ENCODE measurements at regions of chr3 and their contacts with region 1.

Region 1: DNA sequence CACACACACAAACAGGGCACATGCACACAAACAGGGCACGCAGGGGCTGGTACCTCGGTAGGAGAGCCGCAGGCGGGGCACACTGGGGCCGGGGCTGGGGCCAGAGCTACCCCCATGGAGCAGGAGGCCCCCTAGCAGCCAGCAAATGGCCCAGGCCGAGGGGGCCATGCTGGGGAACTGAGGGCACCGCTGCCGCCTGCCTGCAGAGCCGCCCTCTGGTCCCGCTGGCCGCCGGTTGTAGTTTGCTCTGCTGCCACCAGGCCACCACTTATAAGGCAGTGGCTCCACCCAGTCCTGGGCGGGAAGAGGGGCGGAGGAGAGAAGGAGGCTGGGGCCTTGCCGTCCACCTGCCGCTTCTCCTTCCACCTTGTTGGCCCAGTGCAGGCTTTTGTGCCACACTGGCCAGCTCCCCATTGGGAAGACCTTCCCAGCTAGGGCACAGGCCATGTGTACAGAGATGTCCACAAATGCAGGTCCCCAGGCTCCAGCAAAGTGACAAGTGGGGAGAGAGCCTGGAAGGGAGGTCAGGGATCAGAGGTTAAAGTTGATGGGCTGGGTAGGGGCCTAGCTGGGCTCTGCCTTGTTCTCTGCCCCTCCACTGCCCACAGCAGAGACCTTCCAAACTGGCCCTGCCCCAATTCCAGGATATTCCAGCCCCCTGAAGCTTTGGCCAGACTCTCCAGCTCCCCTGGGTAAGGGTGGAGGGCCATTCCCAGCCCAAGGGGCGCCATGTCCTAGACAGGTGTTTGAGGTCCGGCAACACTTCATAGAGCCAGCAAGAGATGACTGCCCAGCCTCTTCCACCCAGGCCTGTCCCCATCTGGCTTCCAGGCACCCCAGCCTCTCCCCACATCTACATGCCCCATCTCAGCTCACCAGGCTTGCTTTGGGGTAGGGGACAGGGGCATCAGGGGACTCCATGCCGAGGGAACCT is at the start of gene SEMA3G:
- DNase-seq: peak; percentile 57 to 61 (median 58)
- H3K4me3 ChIP-seq: no peak within 1 kb of the TSS
- H3K4me3 Mint-ChIP-seq: no peak within 1 kb of the TSS
- H3K27ac ChIP-seq: no peak within 1 kb of the TSS
- H3K27ac Mint-ChIP-seq: peak within 1 kb of the TSS in 2 of 7 donors; percentile 12 to 13
- H3K4me1 ChIP-seq: peaks cover 5 to 11% of the 10 kb centered on the region in 2 donors
- H3K4me1 Mint-ChIP-seq: peaks cover 6% of the 10 kb centered on the region
- H3K27me3 ChIP-seq: no peaks in the 10 kb centered on the region
- H3K27me3 Mint-ChIP-seq: peaks cover 2 to 9% (median 7%) of the 10 kb centered on the region in 3 donors
- CTCF ChIP-seq: peak; percentile 70
- polyA plus RNA-seq, gene SEMA3G: 0.03 TPM in 1 of 3 donors, not detected in the others

Region 2: GRCh38 chr3:52428151-52429005 is 16.7 kb before region 1 on chr3:
- intact Hi-C with region 1: loop called (anchors 1 to 2 kb)
- DNase-seq: peak; percentile 44 to 63 (median 61)
- H3K4me3 ChIP-seq: no peak overlapping the region
- H3K4me3 Mint-ChIP-seq: no peak overlapping the region
- H3K27ac ChIP-seq: no peak overlapping the region
- H3K27ac Mint-ChIP-seq: peak overlapping the region in 1 of 7 donors; percentile 18
- H3K4me1 ChIP-seq: peaks cover 15 to 20% of the 10 kb centered on the region in 2 donors
- H3K4me1 Mint-ChIP-seq: peaks cover 22% of the 10 kb centered on the region
- H3K27me3 ChIP-seq: no peaks in the 10 kb centered on the region
- H3K27me3 Mint-ChIP-seq: peaks cover 2 to 8% (median 3%) of the 10 kb centered on the region in 3 donors
- CTCF ChIP-seq: peak; percentile 81

Measured in CD14-positive monocyte (primary cell).